ENCODE measurements at regions of chr10 and their contacts with region 1.

Region 1: DNA sequence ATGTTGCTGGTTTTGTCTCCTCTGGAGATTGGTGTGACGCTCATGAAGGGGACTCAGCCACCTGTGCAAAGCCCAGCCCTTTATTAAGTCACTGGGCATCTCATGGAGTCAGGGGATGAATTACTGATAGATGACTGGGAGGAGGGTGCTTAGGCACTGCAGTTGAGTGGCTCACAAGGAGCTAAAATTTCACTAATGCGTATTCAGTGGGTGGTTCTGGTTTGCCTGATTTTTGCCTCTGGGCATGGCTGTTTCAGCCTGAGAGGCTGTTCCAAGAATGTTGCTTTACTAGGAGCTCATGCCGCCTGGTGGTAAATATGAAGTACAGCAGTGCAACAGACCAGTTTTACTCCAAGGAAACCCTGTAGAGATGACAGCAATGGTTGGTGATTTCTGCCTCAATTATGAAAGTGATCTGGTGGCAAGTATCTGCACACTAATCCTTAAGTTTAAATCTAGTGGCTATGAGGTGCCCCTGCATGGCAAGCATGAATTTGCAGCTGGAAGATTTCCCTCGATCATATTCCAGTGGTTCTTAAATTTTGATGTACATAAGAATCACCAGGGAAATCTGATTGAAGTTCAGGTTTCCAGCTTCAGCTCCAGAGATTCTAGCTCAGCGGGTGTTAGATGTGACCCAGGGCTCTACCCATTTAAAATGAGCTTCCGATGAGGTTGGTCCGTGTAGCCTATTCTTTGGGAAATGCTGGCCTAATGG is 19.9 kb downstream of the ACTA2 start:
- DNase-seq: peak; percentile 44
- H3K4me3 ChIP-seq: no peak overlapping the region; a peak in 1 of 4 replicates
- H3K27ac ChIP-seq: 0 out of 4 replicates have a peak overlapping the region, but pooled peaks of 1 of the 2 experiments have one; percentile 20
- H3K4me1 ChIP-seq: peaks cover 7 to 11% of the 10 kb centered on the region in 2 experiments; a peak in 3 of 4 replicates
- H3K27me3 ChIP-seq: no peaks in the 10 kb centered on the region
- CTCF ChIP-seq: peak; percentile 90
- EP300 ChIP-seq: 0 out of 4 replicates have a peak, but pooled peaks of 1 of the 2 experiments have one; percentile 34
- RAD21 ChIP-seq: peak; percentile 94

Region 2: GRCh38 chr10:88828310-88828709 is 104.4 kb before region 1 on chr10:
- CTCF ChIA-PET with region 1: interaction called, 425 read pairs
- POLR2A ChIA-PET with region 1: no interaction called
- DNase-seq: no peak
- H3K4me3 ChIP-seq: no peak overlapping the region
- H3K27ac ChIP-seq: no peak overlapping the region
- H3K4me1 ChIP-seq: peaks cover 0 to 2% of the 10 kb centered on the region in 2 experiments; a peak in 1 of 4 replicates
- H3K27me3 ChIP-seq: no peaks in the 10 kb centered on the region
- CTCF ChIP-seq: no peak
- EP300 ChIP-seq: no peak
- RAD21 ChIP-seq: no peak

Region 3: DNA sequence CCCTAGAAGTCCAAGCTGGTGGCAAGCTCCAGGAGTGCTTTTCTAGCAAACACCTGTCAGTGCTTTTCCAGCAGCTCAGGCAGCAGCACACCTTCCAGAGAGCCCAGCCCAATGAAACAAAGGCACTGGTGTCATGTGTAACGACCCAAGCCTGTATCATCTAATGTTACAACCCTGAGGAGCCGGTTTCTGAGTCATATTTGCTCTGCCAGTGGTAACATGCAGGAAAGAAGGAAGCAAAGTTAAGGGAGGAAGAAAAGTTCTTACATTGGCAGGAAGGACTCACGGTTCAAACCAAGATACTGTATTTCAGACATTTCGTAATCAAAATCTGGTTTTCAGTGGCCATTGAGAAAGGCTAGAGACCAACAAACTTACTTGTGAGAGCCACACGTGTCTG is 81.0 kb before region 1 on chr10 and contains the start of gene ANKRD22:
- CTCF ChIA-PET with region 1: interaction called, 56 read pairs
- POLR2A ChIA-PET with region 1: no interaction called
- DNase-seq: no peak
- H3K4me3 ChIP-seq: no peak within 1 kb of the TSS
- H3K27ac ChIP-seq: no peak within 1 kb of the TSS
- H3K4me1 ChIP-seq: peaks cover 0 to 3% of the 10 kb centered on the region in 2 experiments; a peak in 1 of 4 replicates
- H3K27me3 ChIP-seq: no peaks in the 10 kb centered on the region
- CTCF ChIP-seq: no peak
- EP300 ChIP-seq: no peak
- RAD21 ChIP-seq: no peak
- polyA plus RNA-seq, gene ANKRD22: 0.15 TPM in 2 replicates

Region 4: DNA sequence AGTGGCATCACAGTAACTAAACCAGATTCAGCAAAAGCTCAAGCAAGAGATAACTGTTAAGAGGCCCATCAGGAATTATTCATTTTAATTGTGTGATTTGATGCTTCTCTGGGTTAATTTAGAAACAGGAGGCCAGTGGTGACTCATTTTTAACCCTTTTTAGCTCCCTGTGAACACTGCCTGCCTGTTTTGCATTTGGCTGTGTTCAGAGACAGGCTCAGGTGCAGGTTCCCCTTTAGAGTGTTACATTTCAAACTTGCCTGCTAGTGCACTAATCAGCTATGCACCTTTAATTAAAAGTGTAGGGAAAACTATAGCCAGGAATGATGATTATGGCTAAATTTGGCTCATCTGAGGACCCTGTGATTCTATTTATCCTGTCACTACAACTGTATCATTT is 46.1 kb before region 1 on chr10:
- CTCF ChIA-PET with region 1: interaction called, 32 read pairs
- POLR2A ChIA-PET with region 1: interaction called, 3 read pairs
- DNase-seq: no peak
- H3K4me3 ChIP-seq: no peak overlapping the region
- H3K27ac ChIP-seq: no peak overlapping the region; a peak in 3 of 4 replicates
- H3K4me1 ChIP-seq: peaks cover 21 to 81% of the 10 kb centered on the region in 2 experiments
- H3K27me3 ChIP-seq: no peaks in the 10 kb centered on the region
- CTCF ChIP-seq: no peak
- EP300 ChIP-seq: no peak
- RAD21 ChIP-seq: no peak

Region 5: DNA sequence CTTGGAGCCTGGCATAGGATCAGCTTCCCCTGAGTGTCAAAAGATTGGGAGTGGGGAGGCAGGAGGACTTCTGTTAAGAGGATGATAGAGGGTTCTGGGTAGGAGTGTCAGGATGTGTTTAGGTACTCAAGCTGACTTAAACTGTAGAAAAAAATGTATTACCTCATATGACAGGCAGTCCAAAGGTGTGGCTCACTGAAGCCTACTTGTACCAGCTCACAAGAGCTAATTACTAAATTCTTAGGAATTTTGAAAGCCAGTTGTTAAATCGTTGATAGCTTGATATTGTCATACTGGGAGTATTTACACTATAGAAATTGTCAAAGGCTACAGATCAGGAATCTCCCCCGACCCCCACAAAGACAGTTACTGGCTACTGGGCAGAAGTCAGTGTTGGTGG is 90.0 kb after region 1 on chr10:
- CTCF ChIA-PET with region 1: interaction called, 12 read pairs
- POLR2A ChIA-PET with region 1: no interaction called
- DNase-seq: no peak
- H3K4me3 ChIP-seq: no peak overlapping the region
- H3K27ac ChIP-seq: no peak overlapping the region
- H3K4me1 ChIP-seq: no peaks in the 10 kb centered on the region
- H3K27me3 ChIP-seq: no peaks in the 10 kb centered on the region
- CTCF ChIP-seq: no peak
- EP300 ChIP-seq: no peak
- RAD21 ChIP-seq: no peak

Region 6: GRCh38 chr10:89217057-89217990 is 284.6 kb after region 1 on chr10:
- CTCF ChIA-PET with region 1: interaction called, 53 read pairs
- POLR2A ChIA-PET with region 1: no interaction called
- DNase-seq: peak; percentile 30
- H3K4me3 ChIP-seq: no peak overlapping the region; a peak in 1 of 4 replicates
- H3K27ac ChIP-seq: peak overlapping the region; percentile 30 to 55
- H3K4me1 ChIP-seq: peaks cover 4 to 14% of the 10 kb centered on the region in 2 experiments; a peak in 3 of 4 replicates
- H3K27me3 ChIP-seq: no peaks in the 10 kb centered on the region
- CTCF ChIP-seq: peak; percentile 91
- EP300 ChIP-seq: no peak
- RAD21 ChIP-seq: peak; percentile 78

Measured in SK-N-SH (cell line).